AG04450 (cell line): ENCODE measurements at regions of chr12 and their contacts with region 1.

Region 1: DNA sequence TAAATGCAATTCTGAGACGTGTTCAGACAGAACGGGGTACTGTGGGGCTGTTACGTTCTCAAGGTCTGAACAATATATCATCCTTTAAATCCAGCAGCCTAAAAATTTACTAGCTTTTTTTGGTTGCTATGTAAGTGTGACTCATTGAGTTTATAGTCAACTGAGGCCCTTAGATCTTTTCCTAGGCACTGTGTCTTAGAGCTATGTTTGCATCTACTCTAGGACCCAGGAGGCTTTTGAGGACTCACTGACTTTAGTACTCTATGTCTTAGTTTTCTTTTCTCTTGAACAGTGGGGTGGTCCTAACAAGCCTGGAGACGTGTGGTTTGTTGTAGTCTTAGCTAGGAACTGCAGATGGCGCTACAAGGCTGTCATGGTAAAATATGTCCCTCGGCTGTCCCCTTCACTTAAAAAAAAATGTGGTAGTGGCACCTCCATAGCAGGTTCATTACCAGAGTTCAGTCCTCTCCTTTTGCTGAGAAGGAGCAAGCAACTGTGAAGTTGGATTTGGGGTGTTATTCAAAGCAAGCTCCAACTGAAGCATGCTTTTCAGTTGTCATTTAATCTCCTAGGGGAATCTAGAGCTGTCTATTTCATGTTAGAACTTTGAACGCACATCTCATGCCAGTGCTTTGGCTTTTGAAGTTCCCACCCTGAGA is 8.7 kb upstream of the SPATS2 start:
- DNase-seq: no peak
- H3K4me3 ChIP-seq: no peak overlapping the region
- H3K27ac ChIP-seq: no peak overlapping the region
- H3K27me3 ChIP-seq: no peaks in the 10 kb centered on the region
- CTCF ChIP-seq: peak; percentile 82

Region 2: GRCh38 chr12:49331380-49332222 is 27.0 kb before region 1 on chr12:
- CTCF ChIA-PET with region 1: interaction called, 72 read pairs
- POLR2A ChIA-PET with region 1: no interaction called
- DNase-seq: peak; percentile 44
- H3K4me3 ChIP-seq: no peak overlapping the region
- H3K27ac ChIP-seq: no peak overlapping the region
- H3K27me3 ChIP-seq: peaks cover 32% of the 10 kb centered on the region
- CTCF ChIP-seq: peak; percentile 92

Region 3: DNA sequence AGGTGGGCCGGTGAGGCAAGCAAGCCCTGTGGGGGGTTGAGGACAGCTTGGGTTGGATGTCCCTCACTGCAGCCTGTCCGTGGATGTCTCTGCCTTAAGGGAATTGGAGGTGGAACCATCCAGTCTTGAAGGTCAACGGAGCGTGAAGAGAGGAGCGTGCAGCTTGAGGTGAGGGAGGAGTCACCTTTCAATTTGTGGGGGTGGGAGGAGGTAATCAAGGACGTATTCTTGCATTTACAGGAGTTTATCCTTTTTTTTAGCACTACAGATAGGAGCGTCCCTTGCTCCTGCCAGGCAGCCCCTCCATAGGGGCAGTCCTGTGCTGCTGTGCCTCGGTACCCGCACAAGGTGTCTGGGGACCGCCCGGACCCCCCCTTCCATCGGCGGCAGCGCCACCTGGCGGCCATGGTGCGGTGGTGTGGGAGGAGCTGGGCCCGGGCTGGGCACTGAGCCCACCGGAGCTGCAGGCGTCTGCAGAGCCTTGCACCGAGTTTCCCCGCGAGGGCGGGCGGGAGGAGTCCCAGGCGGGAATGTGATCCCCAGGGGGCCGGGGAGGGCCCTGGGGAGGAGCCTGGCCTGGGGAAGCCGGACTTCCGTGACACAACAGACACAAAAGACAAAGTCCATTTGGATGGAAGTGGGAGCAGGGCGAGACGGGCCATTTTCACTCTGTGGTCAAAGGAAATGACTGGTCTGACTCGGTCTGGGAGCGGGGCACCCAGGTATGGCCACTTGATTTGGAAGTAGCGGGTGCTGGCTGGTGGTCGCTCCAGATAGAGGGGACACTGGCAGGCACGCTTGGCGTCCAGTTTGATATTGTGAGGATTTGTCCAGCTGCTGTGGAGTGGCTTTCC is 11.0 kb before region 1 on chr12:
- CTCF ChIA-PET with region 1: interaction called, 123 read pairs
- POLR2A ChIA-PET with region 1: interaction called, 3 read pairs
- DNase-seq: peak; percentile 77
- H3K4me3 ChIP-seq: peak overlapping the region; percentile 66
- H3K27ac ChIP-seq: peak overlapping the region; percentile 39
- H3K27me3 ChIP-seq: peaks cover 44% of the 10 kb centered on the region
- CTCF ChIP-seq: peak; percentile 87

Region 4: DNA sequence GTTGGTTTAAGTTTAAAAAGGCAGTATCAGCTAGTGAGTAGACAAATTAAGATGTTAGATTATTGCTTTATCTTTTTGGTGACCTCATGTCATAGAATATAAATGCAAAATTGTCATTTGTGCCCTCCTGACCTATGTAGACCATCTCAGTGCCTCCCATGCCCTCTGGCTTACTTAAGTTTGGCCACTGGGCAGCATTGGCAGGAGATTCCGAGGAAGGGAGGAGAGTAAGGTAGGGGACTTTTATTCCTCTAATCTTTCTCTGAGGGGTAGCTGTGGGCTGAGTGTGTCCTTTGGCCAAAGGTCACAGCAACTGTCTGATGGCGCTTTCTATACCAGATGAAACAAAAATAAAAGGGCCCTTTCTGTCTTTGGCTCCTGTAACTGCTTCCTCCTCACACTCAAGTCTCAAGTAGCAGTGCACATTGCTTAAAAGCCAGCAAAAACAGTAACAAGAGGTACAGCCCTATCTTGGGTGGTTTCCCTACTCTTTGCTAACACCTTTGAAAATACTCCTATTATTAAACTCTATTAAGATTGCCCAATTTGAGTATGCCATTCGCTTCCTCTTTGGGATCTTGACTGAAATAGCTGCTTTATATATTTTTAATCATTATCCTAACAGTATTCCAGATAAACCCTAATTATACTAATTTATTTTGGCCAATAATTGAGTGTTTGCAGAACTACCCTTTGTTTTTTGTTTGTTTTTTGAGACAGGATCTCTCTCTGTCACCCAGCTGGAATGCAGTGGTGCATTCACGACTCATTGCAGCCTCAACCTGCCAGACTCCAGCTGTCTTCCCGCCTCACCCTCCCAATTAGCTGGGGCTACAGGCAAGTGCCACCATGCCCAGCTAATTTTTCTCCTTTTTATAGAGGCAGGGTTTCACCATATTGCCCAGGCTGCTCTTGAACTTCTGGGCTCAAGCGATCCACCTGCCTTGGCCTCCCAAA is 123.8 kb after region 1 on chr12:
- CTCF ChIA-PET with region 1: interaction called, 15 read pairs
- POLR2A ChIA-PET with region 1: no interaction called
- DNase-seq: no peak
- H3K4me3 ChIP-seq: no peak overlapping the region
- H3K27ac ChIP-seq: no peak overlapping the region
- H3K27me3 ChIP-seq: no peaks in the 10 kb centered on the region
- CTCF ChIP-seq: no peak

Region 5: GRCh38 chr12:49515266-49515665 is 156.7 kb after region 1 on chr12:
- CTCF ChIA-PET with region 1: interaction called, 454 read pairs
- POLR2A ChIA-PET with region 1: interaction called, 5 read pairs
- DNase-seq: peak; percentile 65
- H3K4me3 ChIP-seq: no peak overlapping the region
- H3K27ac ChIP-seq: no peak overlapping the region
- H3K27me3 ChIP-seq: no peaks in the 10 kb centered on the region
- CTCF ChIP-seq: no peak

Region 6: GRCh38 chr12:49553512-49554088 is 195.0 kb after region 1 on chr12:
- CTCF ChIA-PET with region 1: interaction called, 10 read pairs
- POLR2A ChIA-PET with region 1: no interaction called
- DNase-seq: no peak
- H3K4me3 ChIP-seq: no peak overlapping the region
- H3K27ac ChIP-seq: no peak overlapping the region
- H3K27me3 ChIP-seq: peaks cover 23% of the 10 kb centered on the region
- CTCF ChIP-seq: peak; percentile 38